Activated T-helper 1 cell treated with anti-CD3 and anti-CD28 coated beads, Interleukin-12 subunit alpha, Interleukin-12 subunit beta, Interleukin-2, Interleukin-4 antibody, amounts not matched to agents 30 ng/mL and 10 ng/mL and 1 ng/mL, durations not matched to agents 14 hours and 24 hours and 36 hours (primary cell): ENCODE measurements at regions of chr1 and their contacts with region 1.

Region 1: DNA sequence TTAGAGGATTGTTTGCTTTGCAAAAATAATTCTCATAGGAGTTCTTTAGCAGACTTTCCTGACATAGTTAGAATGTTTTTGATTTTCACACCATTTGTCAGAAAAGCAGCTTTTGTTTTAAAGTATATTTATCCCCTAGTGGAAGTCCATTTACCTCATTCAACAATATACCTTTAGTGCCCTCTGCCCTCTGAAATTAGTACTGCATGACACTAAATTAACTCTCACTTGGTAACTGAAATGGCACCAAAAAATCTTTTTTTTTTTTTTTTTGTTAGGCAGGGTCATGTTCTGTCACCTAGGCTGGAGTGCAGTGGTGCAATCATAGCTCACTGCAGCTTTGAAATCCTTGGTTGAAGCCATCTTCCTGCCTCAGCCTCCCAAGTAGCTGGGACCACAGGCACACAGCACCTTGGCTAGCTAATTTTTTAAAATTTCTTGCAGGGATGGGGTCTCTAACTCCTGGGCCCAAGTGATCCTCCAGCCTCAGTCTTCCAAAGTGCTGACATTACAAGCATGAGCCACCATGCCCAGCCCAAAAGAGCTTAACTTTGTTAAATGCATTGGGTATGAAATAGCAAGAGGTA is 13.6 kb downstream of the LRRC42 start:
- DNase-seq: no peak
- H3K4me3 Mint-ChIP-seq: no peak overlapping the region
- H3K27ac Mint-ChIP-seq: no peak overlapping the region
- H3K4me1 Mint-ChIP-seq: peaks cover 13% of the 10 kb centered on the region
- H3K27me3 Mint-ChIP-seq: no peaks in the 10 kb centered on the region

Region 2: GRCh38 chr1:53860967-53861411 is 98.8 kb before region 1 on chr1:
- intact Hi-C with region 1: loop called (anchors 1 kb)
- DNase-seq: peak; percentile 18
- H3K4me3 Mint-ChIP-seq: no peak overlapping the region
- H3K27ac Mint-ChIP-seq: no peak overlapping the region
- H3K4me1 Mint-ChIP-seq: no peaks in the 10 kb centered on the region
- H3K27me3 Mint-ChIP-seq: no peaks in the 10 kb centered on the region

Region 3: DNA sequence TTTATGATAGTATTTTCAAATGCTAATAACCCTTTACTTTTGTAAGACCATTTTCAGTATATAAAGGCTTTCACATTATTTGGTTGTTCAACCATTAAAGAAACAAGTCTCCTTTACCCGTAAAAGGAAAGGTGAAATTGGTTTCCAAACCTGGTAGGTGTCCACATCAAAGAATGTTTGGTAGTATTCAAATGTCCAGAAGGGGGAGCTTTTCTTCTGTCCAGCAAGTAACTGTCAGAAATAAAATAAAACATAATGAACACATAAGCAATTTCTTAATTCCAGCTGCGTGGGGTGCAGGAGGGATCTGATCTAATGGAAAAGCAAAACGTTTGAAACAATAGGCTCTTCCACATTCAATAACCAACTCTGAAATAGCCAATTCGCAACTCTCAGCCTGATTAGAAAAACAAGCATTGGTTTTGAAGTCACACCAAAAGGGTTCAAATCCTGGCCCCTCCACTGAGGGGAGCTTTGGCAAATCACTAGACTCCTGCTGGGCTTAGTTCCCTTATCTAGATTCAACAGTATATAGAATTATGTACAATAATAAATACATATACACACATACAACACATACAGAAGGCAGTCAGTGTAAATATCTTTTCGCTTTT is 81.2 kb before region 1 on chr1:
- intact Hi-C with region 1: loop called (anchors 1 kb)
- DNase-seq: no peak
- H3K4me3 Mint-ChIP-seq: no peak overlapping the region
- H3K27ac Mint-ChIP-seq: no peak overlapping the region
- H3K4me1 Mint-ChIP-seq: no peaks in the 10 kb centered on the region
- H3K27me3 Mint-ChIP-seq: no peaks in the 10 kb centered on the region

Region 4: GRCh38 chr1:54249819-54250435 is 290.2 kb after region 1 on chr1:
- intact Hi-C with region 1: no loop called
- DNase-seq: no peak
- H3K4me3 Mint-ChIP-seq: no peak overlapping the region
- H3K27ac Mint-ChIP-seq: no peak overlapping the region
- H3K4me1 Mint-ChIP-seq: peaks cover 5% of the 10 kb centered on the region
- H3K27me3 Mint-ChIP-seq: no peaks in the 10 kb centered on the region